ENCODE measurements at regions of chr17 and their contacts with region 1.

Region 1: DNA sequence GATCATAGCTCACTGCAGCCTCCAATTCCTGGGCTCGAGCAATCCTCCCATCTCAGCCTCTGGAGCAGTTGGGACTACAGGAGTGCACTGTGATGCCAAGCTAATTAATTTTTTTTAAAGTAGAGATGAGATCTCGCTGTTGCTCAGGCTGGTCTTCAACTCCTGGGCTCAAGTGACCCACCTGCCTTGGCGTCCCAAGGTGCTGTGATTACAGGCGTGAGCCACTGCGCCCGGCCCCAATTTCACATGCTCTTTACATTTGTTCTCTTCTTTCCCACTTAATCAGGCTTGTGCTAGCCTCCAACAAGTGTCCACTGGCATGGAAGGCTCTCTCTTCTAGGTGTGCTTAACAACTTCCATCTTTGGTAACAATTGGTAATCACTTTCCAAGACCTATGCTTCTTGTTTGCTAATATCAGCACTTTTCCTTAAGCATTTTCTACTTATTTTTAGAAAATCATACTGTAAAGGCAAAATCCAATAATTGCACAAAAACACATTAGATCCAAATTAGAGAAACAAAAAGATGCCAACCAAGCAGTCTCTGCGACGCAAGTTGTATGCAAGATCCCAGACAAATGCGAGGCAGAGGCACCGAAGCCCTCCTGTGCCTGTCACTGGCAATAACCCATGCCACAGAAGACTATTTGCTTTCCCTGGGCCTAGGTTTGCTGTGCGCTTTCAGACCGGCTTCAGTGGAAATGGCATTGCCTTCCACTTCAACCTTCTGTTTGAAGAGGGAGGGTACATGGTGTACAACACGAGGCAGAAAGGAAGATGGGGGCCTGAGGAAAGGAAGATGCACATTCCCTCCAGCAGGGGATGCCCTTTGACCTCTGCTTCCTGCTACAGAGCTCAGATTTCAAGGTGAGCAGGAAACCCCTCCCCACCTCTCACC is 52.6 kb downstream of the NOS2 start:
- DNase-seq: peak in 1 of 7 donors; percentile 21
- H3K4me3 ChIP-seq: no peak overlapping the region
- H3K27ac ChIP-seq: no peak overlapping the region
- H3K4me1 ChIP-seq: no peaks in the 10 kb centered on the region
- H3K27me3 ChIP-seq: no peaks in the 10 kb centered on the region
- CTCF ChIP-seq: peak in 1 of 6 experiments; percentile 38
- POLR2A ChIP-seq: no peak

Region 2: DNA sequence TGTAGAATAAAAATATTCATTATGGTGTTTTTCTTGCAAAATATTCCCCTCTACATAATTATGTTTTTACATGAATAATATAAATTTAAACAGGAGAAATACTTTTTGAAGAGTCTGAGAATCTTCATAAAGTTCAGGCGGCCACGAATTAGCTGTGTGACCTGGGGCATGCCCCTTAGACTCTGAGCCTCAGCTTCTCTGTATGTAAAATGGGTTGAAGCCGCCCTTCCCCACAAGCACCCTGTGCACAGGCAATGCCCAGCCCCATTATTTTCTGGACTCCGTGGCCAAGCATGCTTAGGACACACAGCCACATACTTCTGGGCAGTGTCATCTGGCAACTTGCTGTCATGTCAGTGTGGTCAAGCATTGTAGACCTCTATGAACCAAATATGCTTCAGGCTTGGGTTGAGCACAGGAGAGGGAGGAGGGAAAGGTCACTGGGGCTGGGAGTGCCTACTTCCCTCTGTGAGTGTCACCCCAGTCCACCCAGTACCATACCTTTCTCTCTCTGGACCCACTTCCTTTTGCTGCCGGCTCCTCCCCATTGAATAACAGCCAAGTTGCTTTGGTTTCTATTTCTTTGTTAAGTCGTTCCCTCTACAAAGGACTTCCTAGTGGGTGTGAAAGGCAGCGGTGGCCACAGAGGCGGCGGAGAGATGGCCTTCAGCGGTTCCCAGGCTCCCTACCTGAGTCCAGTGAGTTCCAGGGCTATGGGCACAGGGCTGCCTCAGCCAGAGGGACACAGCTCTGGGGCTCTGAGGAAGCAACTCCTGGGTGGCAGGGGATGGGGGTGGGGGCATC is 116.9 kb before region 1 on chr17 and contains the start of gene LGALS9:
- intact Hi-C with region 1: no loop called
- DNase-seq: peak in 2 of 7 donors; percentile 31 to 36
- H3K4me3 ChIP-seq: peak within 1 kb of the TSS in 1 of 4 donors; percentile 23
- H3K27ac ChIP-seq: peak within 1 kb of the TSS in 2 of 5 donors; percentile 41 to 81
- H3K4me1 ChIP-seq: peaks cover 18 to 27% of the 10 kb centered on the region in 2 donors
- H3K27me3 ChIP-seq: no peaks in the 10 kb centered on the region
- CTCF ChIP-seq: no peak
- POLR2A ChIP-seq: no peak
- total RNA-seq, gene LGALS9: 3.5 to 87.7 (median 46.9) TPM

Region 3: GRCh38 chr17:27692766-27693165 is 54.9 kb before region 1 on chr17:
- intact Hi-C with region 1: loop called in 1 of 2 experiments (anchors 5 kb)
- DNase-seq: no peak
- H3K4me3 ChIP-seq: no peak overlapping the region
- H3K27ac ChIP-seq: no peak overlapping the region
- H3K4me1 ChIP-seq: no peaks in the 10 kb centered on the region
- H3K27me3 ChIP-seq: no peaks in the 10 kb centered on the region
- CTCF ChIP-seq: no peak
- POLR2A ChIP-seq: no peak

Region 4: GRCh38 chr17:27778193-27778592 is 30.5 kb after region 1 on chr17:
- intact Hi-C with region 1: no loop called
- DNase-seq: no peak
- H3K4me3 ChIP-seq: no peak overlapping the region
- H3K27ac ChIP-seq: peak overlapping the region in 1 of 5 donors; percentile 45
- H3K4me1 ChIP-seq: peaks cover 0 to 4% of the 10 kb centered on the region in 2 donors
- H3K27me3 ChIP-seq: no peaks in the 10 kb centered on the region
- CTCF ChIP-seq: no peak
- POLR2A ChIP-seq: no peak

Measured in adrenal gland (tissue), 19 donors.